ENCODE measurements at regions of chr2 and their contacts with region 1.

Region 1: GRCh38 chr2:132547074-132547687 is 122.8 kb downstream of the LYPD1 start:
- H3K4me3 Mint-ChIP-seq: no peak overlapping the region
- H3K27ac Mint-ChIP-seq: no peak overlapping the region
- H3K4me1 Mint-ChIP-seq: peaks cover 18% of the 10 kb centered on the region
- H3K27me3 Mint-ChIP-seq: peaks cover 4% of the 10 kb centered on the region

Region 2: DNA sequence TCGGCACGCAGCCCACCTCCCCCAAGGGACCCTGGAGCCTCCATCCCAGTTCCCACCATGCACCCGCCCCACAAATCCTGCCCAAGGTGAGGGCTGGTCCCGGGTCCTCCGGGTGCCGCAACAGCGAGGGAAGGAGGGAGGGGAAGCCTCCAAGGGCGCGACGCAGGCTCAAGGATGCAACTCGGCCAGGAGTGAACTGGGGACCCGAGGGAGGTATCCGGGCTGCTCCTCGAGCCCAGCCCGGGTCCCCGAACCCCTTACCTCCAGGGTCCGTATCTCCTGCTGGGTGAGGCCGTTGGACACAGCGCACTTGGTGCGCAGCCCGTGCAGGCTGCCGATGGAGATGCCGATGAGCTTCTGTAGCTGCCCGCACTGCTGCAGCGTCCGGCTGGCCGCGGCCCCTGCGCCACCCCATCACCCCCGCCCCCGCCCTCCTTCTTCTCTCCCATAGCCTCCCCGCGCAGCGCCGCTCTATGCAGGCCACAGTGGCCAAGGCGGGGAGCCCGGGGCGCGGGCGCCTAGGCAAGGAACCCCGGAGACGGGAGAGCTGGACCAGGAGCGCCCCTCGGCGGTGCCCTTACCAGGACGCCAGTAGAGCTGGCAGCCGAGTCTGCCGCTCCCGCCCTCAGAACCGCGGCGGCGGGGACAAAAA is 509.5 kb before region 1 on chr2:
- intact Hi-C with region 1: no loop called
- H3K4me3 Mint-ChIP-seq: peak overlapping the region; percentile 49
- H3K27ac Mint-ChIP-seq: no peak overlapping the region
- H3K4me1 Mint-ChIP-seq: peaks cover 4% of the 10 kb centered on the region
- H3K27me3 Mint-ChIP-seq: peaks cover 34% of the 10 kb centered on the region

Region 3: DNA sequence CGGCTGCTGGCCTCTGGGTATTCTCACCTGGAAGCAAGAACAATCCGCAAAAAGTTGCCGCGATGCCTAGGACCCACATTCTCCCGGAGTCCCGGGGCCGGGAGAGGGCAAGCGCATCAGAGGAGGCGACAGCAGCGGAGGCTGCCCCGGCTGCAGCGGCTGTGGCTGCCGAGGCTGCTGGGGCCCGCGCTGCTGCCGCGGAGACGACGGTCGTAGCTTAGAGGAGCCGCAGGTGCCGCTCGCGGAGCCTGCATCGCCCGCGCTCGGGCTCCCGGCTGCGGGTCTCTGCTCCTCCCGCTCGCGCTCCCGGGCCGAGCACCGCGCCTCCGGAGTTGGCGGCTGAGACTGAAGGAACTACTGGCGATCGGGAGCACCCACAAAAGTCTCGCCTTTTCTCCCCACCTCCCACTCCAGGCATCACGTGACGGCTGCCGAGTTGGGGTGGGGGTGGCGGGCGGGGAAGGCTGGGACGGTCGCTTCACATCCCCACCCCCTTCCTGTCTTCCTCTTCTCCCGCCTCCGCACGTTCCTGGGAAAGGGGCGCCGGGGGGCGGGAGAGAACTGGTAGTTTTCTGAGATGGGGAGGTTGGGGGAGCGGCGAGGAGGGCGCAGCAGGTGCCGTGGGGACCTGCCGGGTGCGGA is 122.8 kb after region 1 on chr2 and contains the start of gene LYPD1:
- intact Hi-C with region 1: loop called (anchors 10 kb)
- H3K4me3 Mint-ChIP-seq: peak within 1 kb of the TSS; percentile 52
- H3K27ac Mint-ChIP-seq: no peak within 1 kb of the TSS
- H3K4me1 Mint-ChIP-seq: no peaks in the 10 kb centered on the region
- H3K27me3 Mint-ChIP-seq: peaks cover 70% of the 10 kb centered on the region

Region 4: DNA sequence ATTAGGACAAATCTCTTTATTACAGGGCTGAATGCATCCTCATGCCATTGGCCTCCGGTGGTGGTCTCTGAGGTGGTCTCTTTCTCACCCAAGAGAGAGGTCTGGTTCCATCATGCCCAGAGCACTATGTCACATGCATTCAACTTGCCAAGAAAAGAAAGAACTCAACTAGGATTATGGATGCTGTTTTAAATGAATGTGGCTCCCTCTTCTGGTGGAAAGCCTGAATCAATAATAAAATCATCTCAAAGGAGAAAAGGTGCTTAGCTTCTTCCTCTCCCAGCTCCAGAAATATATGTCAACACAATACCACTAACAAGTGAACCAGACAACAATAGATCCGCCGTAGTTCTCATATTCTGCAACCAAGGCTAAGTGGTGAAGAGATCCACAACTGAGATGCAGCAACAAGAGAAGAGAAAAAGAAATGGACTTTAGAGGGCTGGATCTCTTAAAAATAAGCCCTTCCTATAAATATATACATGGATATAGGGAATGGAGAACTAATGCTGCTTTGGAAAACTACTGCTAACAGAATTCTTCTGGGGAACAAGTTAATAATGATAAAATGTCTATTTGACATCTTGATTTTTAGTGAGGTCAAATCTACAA is 624.3 kb after region 1 on chr2:
- intact Hi-C with region 1: loop called (anchors 1 kb)
- H3K4me3 Mint-ChIP-seq: no peak overlapping the region
- H3K27ac Mint-ChIP-seq: no peak overlapping the region
- H3K4me1 Mint-ChIP-seq: no peaks in the 10 kb centered on the region
- H3K27me3 Mint-ChIP-seq: no peaks in the 10 kb centered on the region

Region 5: DNA sequence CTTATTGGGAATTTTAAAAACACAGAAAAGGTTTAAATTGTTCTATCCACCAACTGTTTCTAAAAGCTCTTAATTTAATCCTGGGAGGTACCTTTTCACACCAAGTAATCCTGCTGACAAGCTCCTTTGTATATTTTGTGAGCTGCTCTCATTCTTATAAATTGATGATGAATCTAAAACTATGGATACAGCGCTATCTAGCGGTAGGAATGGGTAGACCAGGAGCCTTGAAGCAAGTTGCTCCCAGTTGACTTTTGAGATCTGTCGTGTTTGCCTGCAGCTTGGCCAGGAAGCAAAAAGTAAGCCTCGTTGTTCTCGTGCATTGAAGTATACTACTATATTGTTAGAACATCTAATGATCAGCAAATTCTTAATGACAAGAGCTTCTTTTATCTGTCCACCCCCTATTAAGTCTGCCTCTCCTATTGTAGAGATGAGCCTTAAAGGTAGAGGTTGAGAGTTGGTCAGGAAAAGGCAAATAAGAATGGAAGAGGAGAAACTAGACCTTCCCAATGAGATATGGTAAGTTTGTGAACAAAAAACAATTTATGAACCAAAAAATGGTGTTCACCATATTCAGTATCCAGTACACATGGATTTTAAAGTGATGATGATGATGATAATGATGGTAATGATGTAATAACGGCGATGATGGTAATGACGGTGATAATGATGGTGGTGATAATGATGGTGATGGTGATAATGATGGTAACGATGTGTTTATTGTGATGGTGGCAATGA is 1233.1 kb after region 1 on chr2:
- intact Hi-C with region 1: loop called (anchors 2 kb)
- H3K4me3 Mint-ChIP-seq: no peak overlapping the region
- H3K27ac Mint-ChIP-seq: no peak overlapping the region
- H3K4me1 Mint-ChIP-seq: no peaks in the 10 kb centered on the region
- H3K27me3 Mint-ChIP-seq: no peaks in the 10 kb centered on the region

Measured in dendritic cell treated with granulocyte-macrophage colony-stimulating factor and Interleukin-4, amounts not matched to agents 40 ng/mL and 50 ng/mL, for 4 days (primary cell).